Activated CD4-positive, alpha-beta T cell treated with anti-CD3 and anti-CD28 coated beads, Interleukin-2, amount 10 ng/mL, durations not matched to agents 7 days and 5 days (primary cell): ENCODE measurements at regions of chr2 and their contacts with region 1.

Region 1: GRCh38 chr2:146108993-146109392 is 1589.1 kb upstream of the ZEB2 start:
- DNase-seq: no peak
- H3K4me3 Mint-ChIP-seq: no peak overlapping the region
- H3K27ac Mint-ChIP-seq: no peak overlapping the region
- H3K4me1 Mint-ChIP-seq: no peaks in the 10 kb centered on the region
- H3K27me3 Mint-ChIP-seq: no peaks in the 10 kb centered on the region

Region 2: GRCh38 chr2:145329976-145330375 is 779.0 kb before region 1 on chr2:
- CTCF ChIA-PET with region 1: no interaction called
- POLR2A ChIA-PET with region 1: interaction called, 11 read pairs
- DNase-seq: no peak
- H3K4me3 Mint-ChIP-seq: no peak overlapping the region
- H3K27ac Mint-ChIP-seq: no peak overlapping the region
- H3K4me1 Mint-ChIP-seq: peaks cover 2% of the 10 kb centered on the region
- H3K27me3 Mint-ChIP-seq: peaks cover 38% of the 10 kb centered on the region